Calu3 (cell line): ENCODE measurements at regions of chr7 and their contacts with region 1.

Region 1: DNA sequence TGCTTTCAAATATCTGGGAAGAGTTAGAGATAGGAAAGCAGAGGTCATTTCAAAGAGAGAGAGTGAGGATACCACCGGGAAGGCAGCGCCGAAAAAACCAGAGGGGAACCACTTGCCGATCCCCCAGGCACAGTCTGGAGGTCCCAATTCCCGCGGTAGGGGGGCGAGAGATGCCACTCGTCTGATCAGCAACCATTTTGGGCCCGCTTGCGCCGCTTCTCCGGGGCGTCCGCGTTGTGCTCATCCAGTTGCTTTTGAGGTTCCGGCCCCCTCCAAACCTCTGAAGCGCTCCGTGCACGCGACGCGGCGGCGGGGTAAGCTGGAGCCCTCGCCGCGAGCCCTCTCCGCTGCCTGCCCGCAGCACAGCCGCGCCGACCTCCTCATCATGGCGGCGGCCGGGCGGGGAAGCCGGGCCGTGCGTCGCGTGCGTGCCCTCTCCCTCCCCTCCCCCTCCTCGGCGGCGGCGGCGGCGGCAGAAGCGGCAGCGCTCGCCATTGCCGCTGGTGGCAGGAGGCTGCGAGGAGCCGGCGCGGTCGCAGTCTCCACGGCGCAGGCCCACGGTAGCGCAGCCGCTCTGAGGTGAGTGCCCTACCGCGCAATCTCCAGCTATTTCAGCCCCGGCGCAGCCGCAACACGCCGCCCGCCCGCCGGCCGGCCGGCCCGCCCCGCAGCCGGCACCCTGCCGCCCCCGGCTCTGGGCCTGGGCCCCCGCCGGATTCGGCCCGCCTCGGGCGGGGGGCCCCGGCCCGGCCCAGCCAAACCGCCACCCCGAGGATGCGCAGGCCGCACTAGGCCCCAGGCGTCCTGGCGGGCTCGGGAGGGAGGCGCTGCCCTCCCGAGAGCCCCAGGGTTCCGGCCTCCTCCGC is at the start of gene NRF1:
- DNase-seq: peak; percentile 95
- H3K4me3 Mint-ChIP-seq: peak within 1 kb of the TSS; percentile 95
- H3K27ac Mint-ChIP-seq: peak within 1 kb of the TSS; percentile 85
- H3K4me1 Mint-ChIP-seq: peaks cover 20% of the 10 kb centered on the region
- H3K27me3 Mint-ChIP-seq: no peaks in the 10 kb centered on the region
- CTCF ChIP-seq: no peak
- total RNA-seq, gene NRF1: 17.6 and 22.1 TPM in 2 replicates

Region 2: DNA sequence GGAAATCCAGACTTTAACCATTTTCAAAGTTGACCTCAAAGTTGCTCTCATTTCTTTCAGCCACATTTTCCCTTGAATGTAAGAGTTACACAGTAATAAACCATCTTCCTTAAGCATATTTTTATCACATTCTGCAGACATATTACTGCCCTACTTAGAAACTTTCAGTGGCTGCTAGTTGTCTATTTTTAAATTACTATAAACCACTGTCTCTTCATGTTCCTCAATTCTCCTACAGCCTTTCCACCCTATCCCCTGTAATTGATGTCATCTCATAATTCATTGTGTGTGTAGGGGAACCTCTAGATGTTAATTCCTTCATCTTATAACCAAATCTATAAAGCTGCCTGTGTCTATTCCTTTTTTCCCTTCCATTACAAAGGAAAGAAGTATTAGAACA is 255.3 kb before region 1 on chr7:
- CTCF ChIA-PET with region 1: no interaction called
- intact Hi-C with region 1: no loop called
- DNase-seq: no peak
- H3K4me3 Mint-ChIP-seq: no peak overlapping the region
- H3K27ac Mint-ChIP-seq: no peak overlapping the region
- H3K4me1 Mint-ChIP-seq: peaks cover 7% of the 10 kb centered on the region
- H3K27me3 Mint-ChIP-seq: no peaks in the 10 kb centered on the region
- CTCF ChIP-seq: no peak

Region 3: DNA sequence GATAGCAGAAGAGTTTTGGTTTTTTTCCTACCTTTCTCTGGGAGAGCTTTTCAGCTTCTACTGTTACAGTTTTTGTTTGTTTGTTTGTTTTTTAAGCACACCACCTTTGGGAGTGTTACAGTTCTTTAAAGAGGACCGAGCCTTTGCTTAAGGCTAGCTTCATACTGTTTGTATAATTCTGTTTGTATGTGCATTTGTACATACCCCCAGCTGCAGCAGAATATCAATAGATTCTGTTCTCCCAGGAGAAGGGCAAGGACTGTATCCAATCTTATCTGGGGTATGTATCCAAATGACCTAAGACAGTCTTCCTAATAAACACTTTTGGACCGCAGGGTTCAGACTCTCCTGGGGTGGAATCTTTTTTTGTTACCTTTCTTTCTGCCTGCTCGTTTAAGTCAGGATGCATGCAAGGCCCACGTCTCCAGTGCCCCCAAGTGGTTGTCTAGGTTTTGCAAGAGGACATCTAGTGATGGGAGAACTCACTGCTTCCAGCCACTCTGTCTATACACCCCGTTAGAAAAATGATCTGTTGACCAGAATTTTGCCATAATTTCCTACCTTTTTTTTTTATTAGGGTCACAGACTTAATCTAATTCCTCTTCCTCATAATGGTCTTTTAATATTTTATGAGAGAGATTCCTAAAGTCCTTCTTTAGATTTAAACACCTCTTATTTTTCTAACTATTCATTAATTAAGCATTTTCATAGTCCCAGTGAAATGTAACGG is 24.0 kb after region 1 on chr7:
- CTCF ChIA-PET with region 1: interaction called, 5 read pairs
- intact Hi-C with region 1: loop called (anchors 1 kb)
- DNase-seq: peak; percentile 76
- H3K4me3 Mint-ChIP-seq: no peak overlapping the region
- H3K27ac Mint-ChIP-seq: no peak overlapping the region
- H3K4me1 Mint-ChIP-seq: no peaks in the 10 kb centered on the region
- H3K27me3 Mint-ChIP-seq: no peaks in the 10 kb centered on the region
- CTCF ChIP-seq: peak; percentile 71